Astrocyte of the cerebellum (primary cell): ENCODE measurements at regions of chr9 and their contacts with region 1.

Region 1: GRCh38 chr9:18274693-18275092 is 199.3 kb upstream of the ADAMTSL1 start:
- DNase-seq: peak; percentile 49
- H3K4me3 ChIP-seq: no peak overlapping the region
- CTCF ChIP-seq: no peak

Region 2: GRCh38 chr9:18114559-18115475 is 159.9 kb before region 1 on chr9:
- in situ Hi-C with region 1: no loop called
- DNase-seq: peak; percentile 32
- H3K4me3 ChIP-seq: no peak overlapping the region
- CTCF ChIP-seq: no peak

Region 3: DNA sequence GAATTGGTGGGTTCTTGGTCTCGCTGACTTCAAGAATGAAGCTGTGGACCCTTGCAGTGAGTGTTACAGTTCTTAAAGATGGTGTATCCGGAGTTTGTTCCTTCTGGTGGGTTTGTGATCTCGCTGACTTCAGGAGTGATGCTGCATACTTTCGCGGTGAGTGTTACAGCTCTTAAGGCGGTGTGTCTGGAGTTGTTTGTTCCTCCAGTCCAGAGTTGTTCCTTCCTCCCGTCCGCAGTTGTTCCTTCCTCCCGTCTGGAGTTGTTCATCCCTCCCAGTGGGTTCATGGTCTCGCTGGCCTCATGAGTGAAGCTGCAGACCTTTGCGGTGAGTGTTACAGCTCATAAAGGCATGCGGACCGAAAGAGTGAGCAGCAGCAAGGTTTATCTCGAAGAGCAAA is 39.6 kb after region 1 on chr9:
- in situ Hi-C with region 1: loop called (anchors 5 kb)
- DNase-seq: no peak
- H3K4me3 ChIP-seq: no peak overlapping the region
- CTCF ChIP-seq: no peak